Motor neuron (in vitro differentiated cells): ENCODE measurements at regions of chr4 and their contacts with region 1.

Region 1: GRCh38 chr4:93764639-93765246 is 63.8 kb upstream of the ATOH1 start:
- ATAC-seq: peak; percentile 47 to 70 (median 63)
- H3K4me3 ChIP-seq: no peak overlapping the region
- H3K27ac ChIP-seq: no peak overlapping the region
- H3K4me1 ChIP-seq: peaks cover 0 to 3% of the 10 kb centered on the region in 2 donors

Region 2: GRCh38 chr4:92305148-92305877 is 1459.4 kb before region 1 on chr4:
- in situ Hi-C with region 1: loop called in 1 of 9 experiments (anchors 25 kb)
- ATAC-seq: peak; percentile 64 to 94 (median 92)
- H3K4me3 ChIP-seq: peak overlapping the region; percentile 53 to 77 (median 60)
- H3K27ac ChIP-seq: peak overlapping the region; percentile 66 to 88
- H3K4me1 ChIP-seq: peaks cover 0 to 14% of the 10 kb centered on the region in 2 donors